Naive thymus-derived CD4-positive, alpha-beta T cell (primary cell): ENCODE measurements at regions of chr7 and their contacts with region 1.

Region 1: DNA sequence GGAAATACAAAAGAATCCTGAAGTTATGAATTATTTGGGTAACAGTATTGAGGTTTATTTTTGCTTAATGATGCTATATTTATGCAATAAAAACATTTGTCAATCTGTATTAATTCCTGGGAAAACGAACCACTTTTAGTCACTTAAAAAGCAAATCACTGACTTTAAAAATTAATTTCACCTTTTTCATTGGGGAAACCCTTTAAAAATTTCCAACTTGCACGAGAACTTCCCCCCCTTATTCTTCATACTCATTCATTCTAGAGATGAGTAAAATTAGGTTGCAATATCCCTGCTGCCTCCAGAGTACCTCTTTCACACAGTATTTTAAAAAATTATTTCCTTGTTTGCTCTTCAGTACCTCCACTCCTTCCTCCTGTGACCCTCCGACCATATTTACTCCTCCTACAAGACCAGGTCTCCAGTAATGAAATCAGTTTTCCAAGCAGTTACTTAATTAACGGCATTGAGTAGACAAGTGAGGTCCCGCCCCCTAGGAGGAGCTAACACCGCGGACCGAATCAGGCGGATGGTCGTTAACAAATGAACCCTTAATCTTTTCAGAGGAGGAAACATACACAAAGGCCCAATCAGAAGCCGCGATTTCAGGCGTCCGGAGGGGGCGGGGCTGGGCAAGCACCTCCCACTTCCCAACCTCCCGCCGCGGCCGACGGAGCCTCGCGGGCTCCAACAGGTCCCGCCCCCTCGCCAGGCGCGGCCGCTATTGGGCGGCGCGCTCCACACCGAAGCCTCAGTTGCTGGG is 465 bp upstream of the TRIM24 start:
- DNase-seq: peak; percentile 95 to 99 (median 98)
- ATAC-seq: peak; percentile 92
- H3K4me3 ChIP-seq: peak overlapping the region; percentile 35
- H3K4me3 Mint-ChIP-seq: peak overlapping the region; percentile 78 to 96 (median 87)
- H3K27ac ChIP-seq: peak overlapping the region; percentile 34
- H3K27ac Mint-ChIP-seq: peak overlapping the region; percentile 0 to 83 (median 61)
- H3K4me1 ChIP-seq: peaks cover 6 to 9% of the 10 kb centered on the region in 2 donors
- H3K4me1 Mint-ChIP-seq: peaks cover 14 to 38% (median 31%) of the 10 kb centered on the region in 7 donors
- H3K27me3 ChIP-seq: no peaks in the 10 kb centered on the region
- H3K27me3 Mint-ChIP-seq: peaks cover 0 to 2% (median 0%) of the 10 kb centered on the region in 5 donors

Region 2: DNA sequence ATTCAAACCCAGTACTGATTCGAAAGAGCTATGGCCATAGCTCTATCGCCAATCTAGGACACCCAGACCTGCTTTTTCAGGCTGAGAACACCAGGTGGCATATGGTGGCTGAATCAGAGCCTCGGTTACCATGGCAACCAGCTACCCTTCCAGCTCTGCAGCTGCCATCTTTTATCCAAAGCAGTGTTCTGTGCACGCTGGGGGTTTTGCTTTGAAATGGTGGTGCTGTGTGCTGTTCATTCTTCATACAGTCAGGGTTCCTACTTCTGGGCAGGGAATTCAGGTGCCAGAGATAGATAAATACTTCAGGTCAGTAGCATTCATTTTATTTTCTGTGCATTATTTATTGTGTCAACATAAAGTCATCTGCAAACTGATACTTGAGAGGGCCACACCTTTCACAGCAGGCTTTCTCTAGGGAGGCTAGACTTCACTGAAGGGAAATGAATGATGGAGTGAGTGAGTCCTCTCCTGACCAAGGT is 298.0 kb before region 1 on chr7:
- CTCF ChIA-PET with region 1: no interaction called
- POLR2A ChIA-PET with region 1: no interaction called
- intact Hi-C with region 1: loop called (anchors 1 to 10 kb)
- DNase-seq: peak; percentile 24 to 87 (median 79)
- ATAC-seq: peak; percentile 99
- H3K4me3 ChIP-seq: no peak overlapping the region
- H3K4me3 Mint-ChIP-seq: no peak overlapping the region
- H3K27ac ChIP-seq: no peak overlapping the region
- H3K27ac Mint-ChIP-seq: no peak overlapping the region
- H3K4me1 ChIP-seq: no peaks in the 10 kb centered on the region
- H3K4me1 Mint-ChIP-seq: no peaks in the 10 kb centered on the region
- H3K27me3 ChIP-seq: no peaks in the 10 kb centered on the region
- H3K27me3 Mint-ChIP-seq: peaks cover 0 to 7% (median 0%) of the 10 kb centered on the region in 5 donors

Region 3: GRCh38 chr7:138449580-138449979 is 10.0 kb before region 1 on chr7:
- CTCF ChIA-PET with region 1: no interaction called
- POLR2A ChIA-PET with region 1: no interaction called
- intact Hi-C with region 1: no loop called
- DNase-seq: peak in 7 of 9 donors; percentile 8 to 37 (median 18)
- ATAC-seq: no peak
- H3K4me3 ChIP-seq: no peak overlapping the region
- H3K4me3 Mint-ChIP-seq: no peak overlapping the region
- H3K27ac ChIP-seq: no peak overlapping the region
- H3K27ac Mint-ChIP-seq: no peak overlapping the region
- H3K4me1 ChIP-seq: no peaks in the 10 kb centered on the region
- H3K4me1 Mint-ChIP-seq: no peaks in the 10 kb centered on the region
- H3K27me3 ChIP-seq: no peaks in the 10 kb centered on the region
- H3K27me3 Mint-ChIP-seq: peaks cover 0 to 3% (median 0%) of the 10 kb centered on the region in 5 donors

Region 4: GRCh38 chr7:138521837-138522461 is 62.4 kb after region 1 on chr7:
- CTCF ChIA-PET with region 1: no interaction called
- POLR2A ChIA-PET with region 1: no interaction called
- intact Hi-C with region 1: loop called in 1 of 2 experiments (anchors 5 kb)
- DNase-seq: no peak
- ATAC-seq: no peak
- H3K4me3 ChIP-seq: no peak overlapping the region
- H3K4me3 Mint-ChIP-seq: no peak overlapping the region
- H3K27ac ChIP-seq: no peak overlapping the region
- H3K27ac Mint-ChIP-seq: no peak overlapping the region
- H3K4me1 ChIP-seq: no peaks in the 10 kb centered on the region
- H3K4me1 Mint-ChIP-seq: no peaks in the 10 kb centered on the region
- H3K27me3 ChIP-seq: no peaks in the 10 kb centered on the region
- H3K27me3 Mint-ChIP-seq: no peaks in the 10 kb centered on the region

Region 5: GRCh38 chr7:138625849-138626230 is 166.2 kb after region 1 on chr7:
- CTCF ChIA-PET with region 1: no interaction called
- POLR2A ChIA-PET with region 1: no interaction called
- intact Hi-C with region 1: loop called (anchors 1 to 5 kb)
- DNase-seq: peak in 6 of 9 donors; percentile 4 to 51 (median 39)
- ATAC-seq: peak; percentile 69
- H3K4me3 ChIP-seq: peak overlapping the region; percentile 18
- H3K4me3 Mint-ChIP-seq: peak overlapping the region; percentile 50 to 83 (median 72)
- H3K27ac ChIP-seq: peak overlapping the region; percentile 46
- H3K27ac Mint-ChIP-seq: peak overlapping the region; percentile 71 to 92 (median 85)
- H3K4me1 ChIP-seq: peaks cover 17 to 30% of the 10 kb centered on the region in 2 donors
- H3K4me1 Mint-ChIP-seq: peaks cover 16 to 55% (median 47%) of the 10 kb centered on the region in 7 donors
- H3K27me3 ChIP-seq: no peaks in the 10 kb centered on the region
- H3K27me3 Mint-ChIP-seq: peaks cover 0 to 8% (median 0%) of the 10 kb centered on the region in 5 donors

Region 6: GRCh38 chr7:138875794-138876193 is 416.2 kb after region 1 on chr7:
- CTCF ChIA-PET with region 1: no interaction called
- POLR2A ChIA-PET with region 1: no interaction called
- intact Hi-C with region 1: loop called in 1 of 2 experiments (anchors 5 kb)
- DNase-seq: peak in 8 of 9 donors; percentile 59 to 77 (median 67)
- ATAC-seq: peak; percentile 98
- H3K4me3 ChIP-seq: no peak overlapping the region
- H3K4me3 Mint-ChIP-seq: peak overlapping the region in 2 of 10 donors; percentile 20 to 29
- H3K27ac ChIP-seq: no peak overlapping the region
- H3K27ac Mint-ChIP-seq: peak overlapping the region in 8 of 9 donors; percentile 16 to 61 (median 48)
- H3K4me1 ChIP-seq: no peaks in the 10 kb centered on the region
- H3K4me1 Mint-ChIP-seq: peaks cover 9 to 23% (median 12%) of the 10 kb centered on the region in 7 donors
- H3K27me3 ChIP-seq: no peaks in the 10 kb centered on the region
- H3K27me3 Mint-ChIP-seq: peaks cover 0 to 9% (median 0%) of the 10 kb centered on the region in 5 donors

Region 7: GRCh38 chr7:139340037-139340807 is 880.6 kb after region 1 on chr7:
- CTCF ChIA-PET with region 1: no interaction called
- POLR2A ChIA-PET with region 1: no interaction called
- intact Hi-C with region 1: loop called (anchors 1 to 2 kb)
- DNase-seq: peak; percentile 93 to 100 (median 99)
- ATAC-seq: peak; percentile 89
- H3K4me3 ChIP-seq: peak overlapping the region; percentile 95
- H3K4me3 Mint-ChIP-seq: peak overlapping the region; percentile 93 to 100 (median 98)
- H3K27ac ChIP-seq: peak overlapping the region; percentile 100
- H3K27ac Mint-ChIP-seq: peak overlapping the region; percentile 98 to 100 (median 100)
- H3K4me1 ChIP-seq: peaks cover 11 to 13% of the 10 kb centered on the region in 2 donors
- H3K4me1 Mint-ChIP-seq: peaks cover 12 to 49% (median 38%) of the 10 kb centered on the region in 7 donors
- H3K27me3 ChIP-seq: no peaks in the 10 kb centered on the region
- H3K27me3 Mint-ChIP-seq: peaks cover 0 to 9% (median 5%) of the 10 kb centered on the region in 5 donors

Region 8: DNA sequence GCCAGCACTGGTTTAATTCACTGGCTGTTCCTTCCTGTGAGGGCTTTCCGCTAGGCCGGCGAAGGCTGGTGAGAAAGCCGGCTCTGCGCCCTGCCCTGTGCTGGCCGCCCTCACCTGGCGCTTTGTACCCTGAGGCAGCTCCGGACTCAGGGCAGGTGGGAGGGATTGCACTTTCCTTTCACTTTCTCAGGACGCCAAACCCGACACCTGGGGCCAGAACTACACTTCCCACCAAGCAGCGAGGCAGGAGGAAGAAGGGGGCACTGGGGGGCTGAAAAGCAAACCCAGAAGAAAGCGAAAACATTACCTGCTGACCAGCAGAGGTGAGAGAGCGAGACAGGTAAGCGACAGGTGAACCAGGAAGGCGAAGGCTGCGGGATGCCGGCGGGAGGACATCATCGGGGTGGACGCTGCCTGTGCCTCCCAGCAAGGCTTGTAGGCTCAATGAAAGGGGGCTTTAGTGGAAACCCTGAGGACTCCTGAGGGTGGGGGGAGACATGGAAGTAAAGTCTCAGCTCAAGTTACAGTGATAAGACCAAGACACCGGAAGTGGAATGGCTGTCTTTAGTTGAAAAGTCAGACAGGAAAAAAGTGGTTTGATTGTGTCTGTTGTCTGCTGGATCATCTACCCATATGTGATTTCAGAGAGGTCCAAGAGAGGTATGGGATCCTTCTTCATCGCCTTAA is 1944.4 kb after region 1 on chr7 and contains the start of gene RAB19:
- CTCF ChIA-PET with region 1: no interaction called
- POLR2A ChIA-PET with region 1: no interaction called
- intact Hi-C with region 1: loop called in 1 of 2 experiments (anchors 10 kb)
- DNase-seq: peak; percentile 7 to 67 (median 56)
- ATAC-seq: peak; percentile 87
- H3K4me3 ChIP-seq: peak within 1 kb of the TSS; percentile 82
- H3K4me3 Mint-ChIP-seq: peak within 1 kb of the TSS; percentile 92 to 99 (median 97)
- H3K27ac ChIP-seq: peak within 1 kb of the TSS; percentile 87
- H3K27ac Mint-ChIP-seq: peak within 1 kb of the TSS; percentile 91 to 99 (median 96)
- H3K4me1 ChIP-seq: peaks cover 8 to 11% of the 10 kb centered on the region in 2 donors
- H3K4me1 Mint-ChIP-seq: peaks cover 13 to 42% (median 29%) of the 10 kb centered on the region in 7 donors
- H3K27me3 ChIP-seq: no peaks in the 10 kb centered on the region
- H3K27me3 Mint-ChIP-seq: peaks cover 0 to 3% (median 0%) of the 10 kb centered on the region in 5 donors
- total RNA-seq, gene RAB19: 1.8 to 13.3 (median 3.3) TPM